Posterior vena cava (tissue), 2 donors: ENCODE measurements at regions of chr1 and their contacts with region 1.

Region 1: GRCh38 chr1:145985502-145986439 is 10.6 kb downstream of the TXNIP start:
- DNase-seq: no peak

Region 2: DNA sequence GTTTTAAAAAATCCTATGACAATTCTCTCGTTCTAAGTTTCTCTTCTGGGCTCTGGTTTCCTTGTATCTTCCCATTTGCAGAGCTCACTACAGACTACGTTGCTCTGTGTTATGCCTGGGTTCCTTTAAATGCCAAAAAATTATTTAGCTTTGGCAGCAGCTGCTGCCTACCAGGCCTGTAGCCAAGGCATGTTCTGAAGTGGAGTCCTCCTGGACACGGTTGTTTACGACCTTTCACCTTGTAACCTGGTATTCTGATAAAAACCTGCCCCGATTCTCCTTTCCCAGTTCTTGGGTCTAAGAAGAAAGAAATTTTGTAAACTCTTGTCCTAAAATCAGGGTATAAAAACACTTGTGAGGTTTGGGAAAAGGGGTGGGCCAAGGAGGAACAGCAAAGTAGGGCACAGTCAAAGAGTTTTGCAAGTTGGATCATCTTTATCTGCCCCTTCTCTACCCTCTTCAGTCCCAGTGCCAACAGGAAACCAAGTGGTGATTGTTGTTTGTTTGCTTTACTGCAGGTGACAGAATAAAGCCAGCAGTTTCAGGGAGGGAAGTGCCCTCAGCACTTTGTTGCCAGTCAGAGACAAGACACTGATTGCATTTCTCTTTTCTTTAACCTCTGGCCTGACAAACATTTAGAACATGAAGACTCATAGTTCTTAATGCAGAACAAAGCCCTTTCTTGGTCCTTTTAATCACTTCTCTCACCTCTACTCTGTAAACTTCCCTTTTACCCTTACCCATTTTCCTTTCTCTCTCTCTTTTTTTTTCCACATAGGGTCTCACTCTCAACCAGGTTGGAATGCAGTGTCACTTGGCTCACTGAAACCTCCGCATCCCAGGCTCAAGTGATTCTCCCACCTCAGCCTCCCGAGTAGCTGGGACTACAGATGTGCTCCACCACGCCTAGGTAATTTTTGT is 13.8 kb after region 1 on chr1:
- intact Hi-C with region 1: loop called in 1 of 2 experiments (anchors 2 kb)
- DNase-seq: no peak